HEK293 (cell line): ENCODE measurements at regions of chr12 and their contacts with region 1.

Region 1: DNA sequence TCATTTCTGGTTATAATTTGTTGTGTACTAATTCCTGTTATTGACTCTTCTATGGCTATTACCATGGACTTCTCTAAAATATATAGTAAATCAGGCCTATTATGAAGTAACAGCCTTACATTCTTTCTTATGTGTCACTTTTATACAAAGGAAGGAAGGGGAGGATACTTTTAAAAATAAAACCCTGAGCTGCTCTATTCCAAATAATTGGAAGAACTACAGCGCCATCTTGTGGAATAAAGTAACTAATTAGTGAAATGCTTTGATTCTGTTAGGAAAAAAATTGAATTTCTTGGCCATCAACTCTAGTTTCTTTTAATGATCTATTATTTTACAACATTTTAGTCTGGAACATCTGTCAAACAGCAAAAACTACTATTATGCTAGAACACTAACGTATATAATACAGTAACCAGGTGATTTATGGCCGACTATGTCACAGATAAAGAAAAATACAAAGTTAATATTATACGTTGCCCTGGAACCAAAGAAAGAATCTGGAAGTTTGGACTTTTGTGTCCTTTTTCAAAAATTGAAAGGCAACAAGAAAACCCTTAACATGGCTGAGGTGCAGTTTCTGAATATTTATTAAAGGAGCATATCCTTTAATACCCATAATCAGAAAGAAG is 55.0 kb upstream of the NELL2 start:
- H3K4me3 ChIP-seq: no peak overlapping the region
- H3K27ac ChIP-seq: no peak overlapping the region
- H3K4me1 ChIP-seq: no peaks in the 10 kb centered on the region
- CTCF ChIP-seq: no peak

Region 2: DNA sequence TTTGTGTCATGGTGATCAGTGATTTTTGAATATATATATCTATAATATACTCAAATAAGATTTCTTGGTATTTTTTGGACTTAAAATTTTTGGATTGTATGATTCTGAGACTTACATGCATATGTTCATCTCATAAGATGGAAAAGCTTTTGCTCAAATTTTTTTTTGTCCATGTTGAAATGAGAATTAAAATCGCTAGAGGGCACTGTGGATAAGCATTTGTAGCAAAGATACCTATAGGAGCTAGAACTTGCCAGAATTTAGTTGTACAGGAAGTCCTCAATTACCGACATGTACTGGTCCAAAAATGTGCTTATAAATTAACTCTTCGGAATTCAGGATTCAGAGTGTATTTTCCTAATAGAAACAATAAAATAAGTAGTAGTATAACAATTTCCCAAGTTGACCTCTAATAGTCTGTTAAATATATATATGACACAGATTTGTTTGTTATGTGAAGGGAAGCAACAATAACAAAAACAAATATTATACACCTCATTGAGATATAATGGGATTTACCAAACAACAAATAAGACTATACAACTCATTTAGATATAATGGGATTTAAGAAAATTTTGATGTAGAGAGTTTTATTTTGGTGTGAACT is 915.6 kb before region 1 on chr12:
- CTCF ChIA-PET with region 1: interaction called, 12 read pairs
- POLR2A ChIA-PET with region 1: no interaction called
- H3K4me3 ChIP-seq: no peak overlapping the region
- H3K27ac ChIP-seq: no peak overlapping the region
- H3K4me1 ChIP-seq: no peaks in the 10 kb centered on the region
- CTCF ChIP-seq: no peak; the same call in 1 of the 2 replicates